ENCODE measurements at regions of chr12 and their contacts with region 1.

Region 1: GRCh38 chr12:24177889-24178288 is 228.4 kb upstream of the SOX5 start:
- DNase-seq: no peak
- ATAC-seq: no peak
- H3K4me3 Mint-ChIP-seq: no peak overlapping the region
- H3K27ac Mint-ChIP-seq: no peak overlapping the region
- H3K4me1 Mint-ChIP-seq: peaks cover 6% of the 10 kb centered on the region
- H3K27me3 Mint-ChIP-seq: no peaks in the 10 kb centered on the region
- CTCF ChIP-seq: no peak

Region 2: DNA sequence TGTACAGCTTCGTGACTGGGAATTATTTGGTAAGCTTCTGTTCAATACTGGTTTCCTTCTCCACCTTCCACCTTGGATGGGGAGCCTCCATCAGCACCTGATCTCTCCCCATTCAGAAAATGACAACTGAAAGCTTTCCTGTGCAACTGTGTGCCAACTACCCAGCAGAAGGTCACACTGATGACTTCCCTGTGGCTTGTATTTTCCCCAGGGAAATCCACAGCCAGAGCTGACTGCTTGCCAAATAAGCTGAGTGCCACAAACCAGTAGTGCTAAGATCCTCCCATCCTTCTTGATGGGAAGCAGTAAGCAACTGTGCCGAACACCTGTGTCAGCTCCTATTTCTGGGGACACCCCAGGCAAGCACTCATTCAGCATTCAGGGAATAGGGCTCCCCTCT is 28.7 kb after region 1 on chr12:
- CTCF ChIA-PET with region 1: no interaction called
- POLR2A ChIA-PET with region 1: no interaction called
- DNase-seq: no peak
- ATAC-seq: no peak
- H3K4me3 Mint-ChIP-seq: no peak overlapping the region
- H3K27ac Mint-ChIP-seq: no peak overlapping the region
- H3K4me1 Mint-ChIP-seq: peaks cover 2% of the 10 kb centered on the region; the same call in 1 of the 2 replicates
- H3K27me3 Mint-ChIP-seq: no peaks in the 10 kb centered on the region
- CTCF ChIP-seq: no peak

Region 3: GRCh38 chr12:24378548-24379407 is 200.9 kb after region 1 on chr12:
- CTCF ChIA-PET with region 1: no interaction called
- POLR2A ChIA-PET with region 1: no interaction called
- DNase-seq: no peak
- ATAC-seq: peak; percentile 56
- H3K4me3 Mint-ChIP-seq: peak overlapping the region; percentile 12
- H3K27ac Mint-ChIP-seq: peak overlapping the region; percentile 85
- H3K4me1 Mint-ChIP-seq: peaks cover 49% of the 10 kb centered on the region
- H3K27me3 Mint-ChIP-seq: no peaks in the 10 kb centered on the region; the same call in 1 of the 2 replicates
- CTCF ChIP-seq: no peak

Region 4: DNA sequence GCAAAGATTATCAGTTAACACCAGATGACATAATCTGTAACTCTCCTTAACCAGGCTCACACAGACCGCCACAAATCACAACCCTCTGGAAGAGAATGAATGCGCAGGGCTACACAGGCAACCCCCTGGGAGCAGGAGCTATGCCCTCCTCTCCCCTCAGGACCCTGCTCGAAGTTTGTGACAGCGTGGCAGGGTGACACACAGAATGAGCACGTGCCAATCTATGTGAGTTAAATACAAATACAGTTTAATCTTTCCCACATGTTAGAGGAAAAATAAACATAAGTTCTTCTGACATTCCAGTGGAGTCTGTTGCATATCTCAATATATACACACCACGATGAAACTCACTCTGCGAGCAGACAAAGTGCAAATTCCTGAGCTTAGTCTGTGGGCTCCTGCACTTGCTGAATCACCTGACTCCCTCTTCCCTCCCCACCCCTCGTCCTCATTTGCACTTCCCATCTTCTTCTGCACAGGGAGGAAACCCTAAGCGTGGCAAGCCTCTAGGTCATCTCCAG is 733.4 kb after region 1 on chr12:
- CTCF ChIA-PET with region 1: no interaction called
- POLR2A ChIA-PET with region 1: interaction called, 10 read pairs
- DNase-seq: no peak
- ATAC-seq: peak; percentile 61
- H3K4me3 Mint-ChIP-seq: no peak overlapping the region
- H3K27ac Mint-ChIP-seq: 0 out of 2 replicates have a peak overlapping the region, but pooled peaks have one; percentile 10
- H3K4me1 Mint-ChIP-seq: peaks cover 23% of the 10 kb centered on the region
- H3K27me3 Mint-ChIP-seq: no peaks in the 10 kb centered on the region
- CTCF ChIP-seq: no peak

Measured in WTC11 (cell line).